ENCODE measurements at regions of chr20 and their contacts with region 1.

Region 1: GRCh38 chr20:21395666-21396598 is 1.4 kb downstream of the NKX2-4 start:
- DNase-seq: no peak

Region 2: GRCh38 chr20:21099751-21100577 is 296.0 kb before region 1 on chr20:
- intact Hi-C with region 1: loop called (anchors 10 kb)
- DNase-seq: peak; percentile 80

Region 3: GRCh38 chr20:21303061-21303871 is 92.7 kb before region 1 on chr20 and contains the start of gene XRN2:
- intact Hi-C with region 1: loop called (anchors 5 kb)
- DNase-seq: peak; percentile 98
- total RNA-seq, gene XRN2: 33.4 TPM

Region 4: DNA sequence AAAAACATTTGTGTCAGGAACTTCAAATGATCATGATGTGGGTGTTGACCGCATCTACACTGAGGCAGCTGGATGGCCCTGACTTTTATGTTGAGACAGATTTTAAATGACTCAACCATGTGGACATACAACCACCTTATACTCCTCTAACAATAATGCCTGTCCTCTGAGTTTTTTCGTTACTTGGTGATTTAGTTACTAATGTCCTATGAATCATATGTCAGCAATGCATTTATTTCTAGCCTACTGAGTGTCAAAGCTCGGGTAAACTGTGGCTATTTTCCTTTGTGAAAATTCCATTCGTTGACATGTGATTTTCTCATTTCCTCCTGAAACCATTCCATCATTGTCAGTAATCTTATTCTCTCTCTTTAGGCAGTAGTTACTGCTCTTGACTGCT is 40.3 kb after region 1 on chr20:
- intact Hi-C with region 1: no loop called
- DNase-seq: no peak

Region 5: GRCh38 chr20:21514553-21515251 is 118.8 kb after region 1 on chr20:
- intact Hi-C with region 1: loop called (anchors 5 kb)
- DNase-seq: no peak

Measured in cardiac septum (tissue), 1 donor.